Endothelial cell of umbilical vein (primary cell): ENCODE measurements at regions of chr1 and their contacts with region 1.

Region 1: DNA sequence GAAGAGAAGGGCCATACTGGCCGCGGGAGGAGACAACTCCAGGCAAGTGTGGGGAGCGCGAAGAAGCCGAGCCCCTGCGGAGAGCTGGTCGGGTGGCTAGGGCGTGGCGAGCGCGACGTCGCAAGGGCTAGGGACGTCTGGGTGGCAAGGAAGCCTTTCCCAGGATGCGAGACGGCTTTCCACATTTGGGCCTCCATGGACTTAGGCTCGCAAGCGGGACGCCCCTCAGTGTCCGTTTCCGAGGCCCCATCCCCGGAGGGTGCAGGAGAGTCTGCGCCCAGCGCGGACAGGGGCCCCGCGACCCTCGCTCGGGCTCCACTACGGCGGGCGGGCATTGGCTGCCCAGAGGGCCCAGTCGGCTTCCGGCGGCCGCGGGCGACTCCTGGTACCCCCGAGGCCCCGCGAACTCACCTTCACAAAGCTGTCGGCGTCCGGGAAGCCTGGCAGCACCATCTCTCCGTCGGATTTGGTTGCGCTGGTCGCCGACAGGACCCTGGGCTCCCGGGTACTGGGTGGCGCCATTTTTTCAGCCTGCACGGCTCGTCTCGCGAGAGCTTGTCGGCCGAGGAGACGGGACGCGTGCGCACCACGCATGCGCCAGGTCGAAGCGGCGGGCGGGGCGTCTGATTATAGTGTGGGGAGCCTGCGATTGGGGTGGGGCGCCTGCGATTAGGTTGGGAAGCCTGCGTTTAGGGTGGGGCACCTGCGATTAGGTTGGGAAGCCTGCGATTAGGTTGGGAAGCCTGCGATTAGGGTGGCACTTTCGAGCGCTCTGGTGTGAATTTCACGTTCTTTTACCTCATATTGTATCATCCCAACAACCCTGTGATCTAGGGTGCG is at the start of gene EXOSC10:
- DNase-seq: peak; percentile 88
- H3K4me3 ChIP-seq: peak within 1 kb of the TSS; percentile 49 to 100 (median 99)
- H3K27ac ChIP-seq: peak within 1 kb of the TSS; percentile 84
- H3K4me1 ChIP-seq: peaks cover 12% of the 10 kb centered on the region
- H3K27me3 ChIP-seq: no peaks in the 10 kb centered on the region
- CTCF ChIP-seq: no peak
- POLR2A ChIP-seq: peak; percentile 47
- total RNA-seq, gene EXOSC10: 103 and 104 TPM in 2 replicates

Region 2: GRCh38 chr1:10888286-10888685 is 211.2 kb before region 1 on chr1:
- CTCF ChIA-PET with region 1: no interaction called
- POLR2A ChIA-PET with region 1: no interaction called
- dilution Hi-C with region 1: no loop called
- intact Hi-C with region 1: no loop called
- DNase-seq: no peak
- H3K4me3 ChIP-seq: no peak overlapping the region
- H3K27ac ChIP-seq: no peak overlapping the region
- H3K4me1 ChIP-seq: no peaks in the 10 kb centered on the region
- H3K27me3 ChIP-seq: peaks cover 25 to 31% of the 10 kb centered on the region in 2 experiments
- CTCF ChIP-seq: no peak
- POLR2A ChIP-seq: no peak

Region 3: GRCh38 chr1:11059990-11060830 is 39.3 kb before region 1 on chr1 and contains the start of gene SRM:
- CTCF ChIA-PET with region 1: no interaction called
- POLR2A ChIA-PET with region 1: no interaction called
- dilution Hi-C with region 1: no loop called
- intact Hi-C with region 1: loop called (anchors 5 kb)
- DNase-seq: peak; percentile 89
- H3K4me3 ChIP-seq: peak within 1 kb of the TSS; percentile 88 to 91 (median 89)
- H3K27ac ChIP-seq: peak within 1 kb of the TSS; percentile 5
- H3K4me1 ChIP-seq: peaks cover 13% of the 10 kb centered on the region
- H3K27me3 ChIP-seq: no peaks in the 10 kb centered on the region
- CTCF ChIP-seq: peak; percentile 13 to 45
- POLR2A ChIP-seq: peak; percentile 84
- total RNA-seq, gene SRM: 167 and 172 TPM in 2 replicates

Region 4: DNA sequence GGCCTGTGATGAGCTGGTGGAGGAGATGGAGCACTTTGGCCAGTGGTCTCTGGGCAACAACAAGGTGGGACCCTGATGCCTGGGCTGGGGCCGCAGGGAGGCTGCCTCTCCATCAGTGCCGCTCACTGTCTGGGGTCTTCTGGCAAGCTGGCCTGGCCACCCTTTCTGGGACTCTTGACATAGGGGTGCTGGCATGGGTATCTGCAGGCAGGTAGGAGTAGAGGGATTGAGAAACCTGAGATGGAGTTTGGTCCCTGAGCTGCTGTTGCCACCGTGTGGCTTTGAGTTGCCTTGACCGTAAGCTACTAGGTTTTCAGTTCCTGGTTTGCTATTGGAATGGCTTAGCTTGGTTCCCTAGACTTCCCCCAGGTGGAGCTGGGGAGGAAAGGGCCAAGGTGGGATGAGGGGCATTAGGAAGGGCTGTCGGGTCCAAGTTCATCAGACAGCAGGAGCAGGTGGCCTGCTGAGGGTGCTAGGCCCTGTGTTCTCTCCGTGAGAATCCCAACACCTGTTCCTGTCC is 867.6 kb after region 1 on chr1:
- CTCF ChIA-PET with region 1: no interaction called
- POLR2A ChIA-PET with region 1: no interaction called
- dilution Hi-C with region 1: no loop called
- intact Hi-C with region 1: no loop called
- DNase-seq: peak; percentile 37
- H3K4me3 ChIP-seq: no peak overlapping the region
- H3K27ac ChIP-seq: no peak overlapping the region
- H3K4me1 ChIP-seq: no peaks in the 10 kb centered on the region
- H3K27me3 ChIP-seq: no peaks in the 10 kb centered on the region
- CTCF ChIP-seq: peak; percentile 25 to 50
- POLR2A ChIP-seq: no peak